Activated CD4-positive, alpha-beta T cell treated with anti-CD3 and anti-CD28 coated beads for 36 hours (primary cell): ENCODE measurements at regions of chr6 and their contacts with region 1.

Region 1: GRCh38 chr6:692855-693722 is at the start of gene EXOC2:
- DNase-seq: peak; percentile 91
- ATAC-seq: peak; percentile 84
- H3K4me3 Mint-ChIP-seq: peak within 1 kb of the TSS; percentile 91
- H3K27ac Mint-ChIP-seq: peak within 1 kb of the TSS; percentile 92
- H3K4me1 Mint-ChIP-seq: peaks cover 26% of the 10 kb centered on the region
- H3K27me3 Mint-ChIP-seq: no peaks in the 10 kb centered on the region
- total RNA-seq, gene EXOC2: 31.9 to 38.9 TPM

Region 2: DNA sequence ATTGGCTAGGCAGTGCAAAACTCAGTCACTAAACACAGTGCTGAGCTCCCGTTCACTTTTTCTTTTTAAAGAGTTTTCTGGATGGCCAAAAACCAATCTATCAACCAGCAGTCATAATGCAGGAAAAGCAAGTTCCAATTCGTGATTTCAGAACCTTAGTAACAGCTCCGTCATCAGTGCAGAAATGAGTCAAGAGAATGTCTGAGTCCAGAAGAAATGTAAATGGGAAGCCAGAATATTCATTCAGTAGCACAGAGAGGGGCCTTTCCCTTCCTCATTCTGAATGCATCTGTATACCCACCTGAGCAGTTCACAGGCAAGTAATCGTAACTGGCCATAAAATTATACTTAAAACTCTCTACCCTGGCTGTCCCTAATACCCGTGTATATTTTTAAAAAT is 56.6 kb before region 1 on chr6:
- CTCF ChIA-PET with region 1: no interaction called
- POLR2A ChIA-PET with region 1: no interaction called
- intact Hi-C with region 1: loop called in 1 of 2 experiments (anchors 5 kb)
- DNase-seq: peak; percentile 25
- ATAC-seq: peak; percentile 95
- H3K4me3 Mint-ChIP-seq: no peak overlapping the region
- H3K27ac Mint-ChIP-seq: no peak overlapping the region
- H3K4me1 Mint-ChIP-seq: peaks cover 18% of the 10 kb centered on the region
- H3K27me3 Mint-ChIP-seq: no peaks in the 10 kb centered on the region

Region 3: DNA sequence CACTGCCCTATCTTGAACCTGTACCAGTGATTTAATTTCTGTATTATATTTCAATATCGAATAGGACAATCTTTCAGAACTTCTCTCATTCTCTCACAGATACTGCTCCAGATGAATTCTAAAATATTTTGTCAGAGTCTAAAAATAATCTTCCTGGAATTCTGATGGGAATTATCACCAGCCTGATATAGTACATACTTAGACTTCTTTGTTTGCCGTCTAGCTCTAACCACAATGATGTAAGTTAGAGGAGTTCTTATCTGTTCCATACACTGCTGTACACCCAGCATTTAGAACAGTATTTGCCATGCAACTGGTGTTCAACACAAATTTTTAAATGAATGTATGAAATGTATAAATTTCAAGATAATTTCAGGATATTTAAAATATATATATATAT is 34.8 kb before region 1 on chr6:
- CTCF ChIA-PET with region 1: no interaction called
- POLR2A ChIA-PET with region 1: no interaction called
- intact Hi-C with region 1: loop called in 1 of 2 experiments (anchors 5 kb)
- DNase-seq: no peak
- ATAC-seq: no peak
- H3K4me3 Mint-ChIP-seq: no peak overlapping the region
- H3K27ac Mint-ChIP-seq: no peak overlapping the region
- H3K4me1 Mint-ChIP-seq: peaks cover 48% of the 10 kb centered on the region
- H3K27me3 Mint-ChIP-seq: no peaks in the 10 kb centered on the region

Region 4: DNA sequence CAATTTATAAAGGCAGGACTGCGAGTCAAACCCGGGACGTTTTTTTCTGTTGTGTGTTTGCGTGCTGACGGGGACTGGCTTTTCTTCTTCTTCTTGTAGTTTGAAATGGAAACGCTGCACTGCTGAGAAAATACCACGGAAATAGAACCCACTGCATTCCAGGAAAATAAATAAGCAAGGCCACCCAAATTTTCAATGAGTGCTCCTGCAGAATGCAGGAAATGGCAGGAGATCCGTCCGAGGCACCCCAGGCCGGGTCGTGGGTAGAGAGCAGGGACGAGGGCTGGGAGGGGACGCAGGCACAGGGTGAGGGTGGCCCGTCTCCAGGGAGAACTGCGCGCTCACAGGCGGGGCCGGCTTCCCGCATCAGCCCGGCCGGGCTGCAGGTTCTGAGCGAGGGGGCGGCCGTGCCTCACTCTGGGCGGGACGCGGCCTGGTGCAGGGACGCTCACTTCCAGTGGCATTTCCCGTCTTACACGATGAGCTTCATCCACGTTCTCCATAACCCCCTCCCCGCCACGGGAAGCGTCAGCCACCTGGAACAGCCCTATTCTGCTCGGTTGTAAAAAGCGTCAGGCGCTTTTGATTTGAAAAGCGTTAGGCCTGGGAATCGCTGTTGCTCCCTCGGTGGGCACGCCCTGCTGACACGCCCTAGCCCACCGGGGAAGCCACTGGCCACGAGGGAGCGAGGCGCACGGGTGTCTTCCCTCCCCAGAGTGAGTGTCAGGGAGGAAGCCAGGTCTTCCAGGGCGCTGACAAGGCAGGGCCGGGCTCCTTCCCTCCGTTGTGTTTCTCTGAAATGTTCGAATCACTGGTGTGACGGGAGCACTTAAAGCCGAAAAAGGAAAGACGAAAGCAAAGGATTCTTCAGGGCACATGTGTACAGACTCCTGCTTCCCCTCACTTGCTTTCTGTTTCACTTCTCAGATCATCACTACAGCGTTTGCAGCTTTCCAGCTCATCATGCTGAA is 17.8 kb after region 1 on chr6:
- CTCF ChIA-PET with region 1: interaction called, 3 read pairs
- POLR2A ChIA-PET with region 1: interaction called, 4 read pairs
- intact Hi-C with region 1: loop called (anchors 1 to 2 kb)
- DNase-seq: peak; percentile 59
- ATAC-seq: peak; percentile 92
- H3K4me3 Mint-ChIP-seq: peak overlapping the region; percentile 80
- H3K27ac Mint-ChIP-seq: peak overlapping the region; percentile 97
- H3K4me1 Mint-ChIP-seq: peaks cover 22% of the 10 kb centered on the region
- H3K27me3 Mint-ChIP-seq: peaks cover 6% of the 10 kb centered on the region